ENCODE measurements at regions of chr16 and their contacts with region 1.

Region 1: DNA sequence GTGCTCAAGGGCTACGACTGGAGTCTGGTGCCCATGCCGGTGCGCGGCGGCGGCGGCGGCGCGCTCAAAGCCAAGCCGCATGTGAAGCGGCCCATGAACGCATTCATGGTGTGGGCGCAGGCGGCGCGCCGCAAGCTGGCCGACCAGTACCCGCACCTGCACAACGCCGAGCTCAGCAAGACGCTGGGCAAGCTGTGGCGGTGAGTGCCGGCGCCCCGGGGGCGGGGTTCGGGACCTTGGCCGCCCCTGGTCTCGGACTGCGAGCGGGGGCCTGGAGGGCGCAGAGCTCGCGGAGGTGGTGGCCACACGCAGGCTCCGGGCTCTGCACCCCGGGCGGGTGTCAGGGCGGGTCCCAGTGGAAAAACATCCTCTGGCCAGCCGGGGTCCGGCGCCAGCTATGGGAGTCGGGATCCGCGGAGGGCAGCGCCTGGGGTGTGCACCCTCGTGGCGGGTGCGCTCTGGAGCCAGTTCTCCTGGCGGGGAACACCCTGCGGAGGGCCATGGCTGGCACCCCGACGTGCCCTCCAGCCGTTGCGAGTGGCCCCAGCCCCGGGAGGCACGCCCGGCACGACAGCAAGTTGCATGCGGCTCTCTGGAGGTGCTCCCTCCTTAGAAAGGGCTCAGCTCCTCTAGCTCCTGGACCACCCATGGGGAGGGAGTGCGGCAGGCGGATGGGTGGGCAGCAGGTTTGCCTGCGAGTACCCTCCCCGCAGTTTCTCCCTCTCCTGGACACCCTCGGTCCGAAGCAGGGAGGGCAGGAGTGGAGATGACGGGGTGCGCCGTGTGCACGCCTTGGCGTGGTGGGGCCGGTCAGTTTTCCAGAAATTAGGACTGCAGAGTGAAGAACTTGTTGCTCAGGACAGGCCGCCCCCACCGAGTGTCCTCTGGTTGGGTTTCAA is 824 bp downstream of the SOX8 start:
- DNase-seq: peak in 1 of 2 experiments; percentile 40
- ATAC-seq: peak in 1 of 2 experiments; percentile 17; a peak in 3 of 6 replicates
- H3K4me3 ChIP-seq: peak overlapping the region; percentile 59
- H3K27ac ChIP-seq: peak overlapping the region in 1 of 2 experiments; percentile 74; a peak in 3 of 6 replicates
- H3K4me1 ChIP-seq: peaks cover 12% of the 10 kb centered on the region
- CTCF ChIP-seq: no peak
- EP300 ChIP-seq: no peak
- POLR2A ChIP-seq: no peak
- RAD21 ChIP-seq: no peak

Region 2: DNA sequence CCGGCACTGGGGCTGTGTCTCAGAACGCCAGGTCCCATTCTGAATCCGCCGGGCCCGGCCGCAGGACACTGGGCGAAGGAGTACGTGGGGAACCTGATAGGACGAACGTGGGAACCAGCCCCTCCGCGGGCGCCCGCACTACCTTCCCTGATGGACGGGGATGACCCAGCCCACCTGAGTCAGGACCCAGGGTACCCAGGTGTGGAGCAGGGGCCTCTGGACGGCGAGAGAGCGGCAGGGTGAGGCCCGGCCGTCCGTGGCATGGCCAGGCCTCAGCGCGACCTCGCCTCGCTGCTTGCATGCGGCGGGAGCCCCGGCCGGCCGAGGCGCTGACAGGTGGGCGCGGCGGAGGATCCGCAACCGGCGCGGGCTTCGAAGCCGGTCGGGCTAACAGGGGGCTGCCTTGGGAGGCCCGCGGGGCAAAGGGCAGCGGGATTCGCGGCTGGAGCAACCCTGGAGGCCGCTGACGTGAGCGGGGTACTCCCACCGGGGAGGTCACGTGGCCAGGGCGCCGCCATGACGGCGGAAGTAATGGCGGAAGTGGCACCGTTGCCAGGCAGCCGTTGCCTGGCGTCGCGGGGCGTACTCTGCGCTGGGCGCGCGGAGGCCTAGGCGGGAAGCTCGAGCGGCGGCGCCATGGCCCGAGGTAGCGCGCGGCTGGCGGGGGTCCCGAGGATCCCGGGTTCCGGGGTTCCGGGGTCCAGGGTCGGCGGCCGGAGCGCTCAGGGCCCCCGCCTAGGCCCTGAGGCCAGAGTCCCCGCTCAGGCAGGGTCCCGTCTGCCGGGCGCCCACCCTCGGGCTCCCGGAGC is 333.4 kb before region 1 on chr16 and contains the start of gene WDR90:
- CTCF ChIA-PET with region 1: no interaction called
- POLR2A ChIA-PET with region 1: no interaction called
- DNase-seq: peak; percentile 94
- ATAC-seq: peak; percentile 70 to 85
- H3K4me3 ChIP-seq: peak within 1 kb of the TSS; percentile 79
- H3K27ac ChIP-seq: peak within 1 kb of the TSS; percentile 90 to 99
- H3K4me1 ChIP-seq: peaks cover 43% of the 10 kb centered on the region
- CTCF ChIP-seq: no peak
- EP300 ChIP-seq: no peak
- POLR2A ChIP-seq: peak; percentile 57
- RAD21 ChIP-seq: no peak
- polyA plus RNA-seq, gene WDR90: 6.5 and 7.3 TPM in 2 replicates

Region 3: DNA sequence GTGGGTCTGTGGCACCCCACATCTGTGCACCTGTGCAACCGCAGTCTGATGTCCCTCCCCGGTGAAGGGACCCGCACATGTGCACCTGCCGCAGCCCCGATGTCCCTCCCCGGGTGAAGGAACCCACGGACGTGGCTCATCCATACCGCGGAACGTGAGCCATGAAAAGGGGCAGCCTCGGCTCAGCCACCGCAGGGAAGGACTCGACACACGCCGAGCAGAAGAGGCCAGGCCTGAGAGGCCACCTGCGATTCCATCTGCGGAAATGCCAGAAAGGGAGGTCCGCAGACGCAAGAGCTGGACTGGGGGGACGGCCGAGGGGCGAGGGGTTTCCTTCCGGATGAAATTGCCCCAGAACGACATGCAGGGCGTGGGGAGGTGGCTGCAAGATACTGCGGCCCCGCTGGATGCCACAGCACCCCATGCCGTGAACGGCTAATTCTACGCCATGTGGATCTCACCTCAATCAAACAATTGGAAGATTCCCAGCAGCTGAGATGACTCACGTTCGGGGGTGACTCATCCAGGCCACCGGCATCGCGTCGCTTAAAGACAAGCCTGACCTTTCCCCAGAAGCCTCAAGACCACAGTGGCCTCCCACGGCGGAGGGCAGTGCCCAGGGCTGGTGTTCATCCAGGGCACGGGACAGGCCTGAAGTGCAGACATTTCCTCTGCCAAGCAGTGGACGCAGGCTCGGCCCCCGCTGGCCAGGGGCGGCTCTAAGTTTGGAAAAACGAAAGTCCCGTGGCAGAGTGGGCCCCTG is 20.2 kb after region 1 on chr16:
- CTCF ChIA-PET with region 1: interaction called, 37 read pairs
- POLR2A ChIA-PET with region 1: interaction called, 3 read pairs
- DNase-seq: peak; percentile 90 to 95
- ATAC-seq: peak; percentile 66 to 73
- H3K4me3 ChIP-seq: peak overlapping the region; percentile 9; the same call in 1 of the 3 replicates
- H3K27ac ChIP-seq: peak overlapping the region; percentile 74 to 88
- H3K4me1 ChIP-seq: peaks cover 45% of the 10 kb centered on the region
- CTCF ChIP-seq: no peak
- EP300 ChIP-seq: no peak; a peak in 1 of 5 replicates
- POLR2A ChIP-seq: no peak
- RAD21 ChIP-seq: no peak

Measured in A549 (cell line).